Heart right ventricle (tissue), 16 donors: ENCODE measurements at regions of chr2 and their contacts with region 1.

Region 1: DNA sequence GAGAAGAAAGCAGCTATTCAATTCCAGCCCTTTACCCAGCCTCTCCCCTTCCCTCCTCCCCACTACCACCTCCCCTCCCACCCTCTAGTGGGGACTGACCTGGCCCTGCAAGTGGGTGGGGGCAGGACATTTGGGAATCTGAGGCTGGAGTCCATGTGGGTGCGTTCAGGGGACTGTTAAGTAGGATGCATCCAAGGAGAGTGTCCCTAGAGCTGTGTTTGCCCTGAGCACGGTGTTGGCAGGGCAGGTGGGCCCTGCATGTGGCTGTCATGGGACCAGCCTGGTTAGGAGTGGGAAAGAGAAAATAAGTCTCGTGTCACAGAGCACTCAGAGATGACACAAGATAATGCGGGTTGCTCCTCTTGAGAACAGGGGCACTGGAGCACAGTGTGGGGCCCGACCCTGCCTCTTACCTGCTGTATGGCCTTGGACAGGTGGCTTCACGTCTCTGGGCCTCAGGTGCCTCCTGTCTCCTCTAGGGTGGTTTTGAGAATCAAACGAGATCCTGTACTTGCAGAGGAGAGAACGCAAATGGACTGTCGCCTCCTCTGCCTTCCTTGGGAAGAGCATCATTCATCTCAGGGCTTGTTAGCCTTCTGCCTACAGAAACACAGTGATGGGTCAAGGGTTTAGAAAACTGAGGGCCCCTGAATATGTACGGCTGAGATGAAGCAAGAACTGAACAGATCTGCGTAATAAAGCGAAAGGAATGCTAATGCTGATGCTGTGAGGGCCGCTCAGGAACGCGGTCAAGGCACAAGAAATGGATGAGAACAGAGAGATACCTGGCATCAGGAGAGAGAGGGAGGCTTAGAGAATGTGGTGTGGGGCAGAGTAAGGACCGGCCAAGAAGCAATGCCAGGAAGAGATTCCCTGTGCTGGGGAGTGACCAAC is 187.7 kb upstream of the HAAO start:
- DNase-seq: no peak
- ATAC-seq: no peak
- H3K4me3 ChIP-seq: no peak overlapping the region
- H3K27ac ChIP-seq: no peak overlapping the region
- H3K4me1 ChIP-seq: peaks cover 7 to 28% (median 11%) of the 10 kb centered on the region in 9 donors
- H3K27me3 ChIP-seq: no peaks in the 10 kb centered on the region
- CTCF ChIP-seq: no peak

Region 2: DNA sequence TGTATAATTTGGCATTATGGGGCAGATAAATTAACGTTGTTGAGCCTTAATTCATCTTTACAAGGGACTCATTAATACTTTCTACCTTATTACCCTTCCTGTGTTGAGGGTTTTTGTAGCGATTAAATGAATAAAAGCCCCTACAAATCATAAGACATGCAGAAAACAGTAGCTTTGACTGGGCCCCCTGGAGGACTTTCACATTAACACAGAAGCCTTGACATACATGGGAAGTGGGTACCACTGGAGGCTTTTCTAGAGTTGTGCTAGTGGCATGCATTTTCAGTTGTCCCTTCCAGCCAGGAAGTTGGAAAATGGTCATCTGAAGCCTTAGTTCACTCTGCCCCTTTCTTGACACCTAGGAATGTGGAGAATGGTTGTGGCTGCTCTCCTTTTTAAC is 381.5 kb before region 1 on chr2:
- intact Hi-C with region 1: no loop called
- DNase-seq: no peak
- ATAC-seq: no peak
- H3K4me3 ChIP-seq: no peak overlapping the region
- H3K27ac ChIP-seq: no peak overlapping the region
- H3K4me1 ChIP-seq: peaks cover 0 to 7% (median 0%) of the 10 kb centered on the region in 9 donors
- H3K27me3 ChIP-seq: no peaks in the 10 kb centered on the region
- CTCF ChIP-seq: no peak

Region 3: GRCh38 chr2:43000242-43001054 is 20.3 kb after region 1 on chr2:
- intact Hi-C with region 1: loop called in 1 of 10 experiments (anchors 1 kb)
- DNase-seq: no peak
- ATAC-seq: peak in 3 of 8 donors; percentile 19 to 42 (median 25)
- H3K4me3 ChIP-seq: no peak overlapping the region
- H3K27ac ChIP-seq: no peak overlapping the region
- H3K4me1 ChIP-seq: peaks cover 0 to 8% (median 0%) of the 10 kb centered on the region in 9 donors
- H3K27me3 ChIP-seq: no peaks in the 10 kb centered on the region
- CTCF ChIP-seq: no peak

Region 4: DNA sequence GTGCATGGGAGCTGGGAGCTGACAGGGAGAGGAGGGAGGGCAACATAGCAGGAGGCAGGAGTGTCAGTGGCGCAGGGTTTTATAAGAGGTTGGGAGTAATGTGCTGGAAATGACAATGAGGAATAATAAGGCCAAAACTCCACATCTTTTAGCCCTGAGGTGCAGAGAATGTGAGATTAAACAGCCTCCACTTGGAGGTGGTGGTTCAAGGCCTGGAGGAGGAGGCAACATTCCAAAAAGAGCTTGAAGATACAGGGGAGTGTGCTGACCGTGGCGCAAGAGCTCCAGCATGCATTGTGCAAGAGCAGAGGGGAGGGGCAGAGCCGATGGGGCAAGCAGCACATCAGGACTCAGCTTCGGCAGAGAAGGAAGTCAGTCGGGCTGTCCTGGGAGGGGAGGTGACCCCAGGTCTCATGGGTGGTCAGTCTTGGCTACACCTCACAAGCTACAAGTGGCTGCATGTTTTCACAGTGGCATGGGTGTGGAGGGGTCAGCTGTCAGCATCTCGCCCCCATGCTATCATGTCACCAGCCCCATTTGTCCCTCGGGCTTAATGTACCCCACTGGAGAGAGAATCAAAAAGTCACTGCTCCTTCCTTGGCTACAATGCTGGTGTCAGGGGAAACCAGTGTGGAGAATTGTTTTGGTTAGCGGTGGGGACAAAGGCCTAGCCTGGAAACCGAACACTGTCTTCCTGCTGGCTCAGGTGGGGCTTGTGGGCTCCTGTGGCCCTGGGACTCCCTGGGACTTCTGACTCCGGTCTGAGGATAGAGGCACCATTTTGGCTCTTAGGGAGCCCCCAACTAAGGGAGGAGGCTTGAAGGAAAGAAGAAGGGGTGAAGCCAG is 38.3 kb after region 1 on chr2:
- intact Hi-C with region 1: loop called in 8 of 10 experiments (anchors 5 to 10 kb)
- DNase-seq: peak; percentile 66 to 79
- ATAC-seq: peak; percentile 62 to 92 (median 87)
- H3K4me3 ChIP-seq: no peak overlapping the region
- H3K27ac ChIP-seq: peak overlapping the region; percentile 59 to 89 (median 79)
- H3K4me1 ChIP-seq: peaks cover 0 to 42% (median 22%) of the 10 kb centered on the region in 9 donors
- H3K27me3 ChIP-seq: no peaks in the 10 kb centered on the region
- CTCF ChIP-seq: no peak

Region 5: GRCh38 chr2:43073368-43073767 is 93.3 kb after region 1 on chr2:
- intact Hi-C with region 1: loop called in 1 of 10 experiments (anchors 5 kb)
- DNase-seq: peak in 1 of 2 donors; percentile 41
- ATAC-seq: peak in 5 of 8 donors; percentile 6 to 54 (median 16)
- H3K4me3 ChIP-seq: no peak overlapping the region
- H3K27ac ChIP-seq: peak overlapping the region; percentile 37 to 95 (median 75)
- H3K4me1 ChIP-seq: peaks cover 51 to 90% (median 67%) of the 10 kb centered on the region in 9 donors
- H3K27me3 ChIP-seq: no peaks in the 10 kb centered on the region
- CTCF ChIP-seq: no peak

Region 6: GRCh38 chr2:43255296-43255910 is 275.3 kb after region 1 on chr2:
- intact Hi-C with region 1: no loop called
- DNase-seq: no peak
- ATAC-seq: no peak
- H3K4me3 ChIP-seq: no peak overlapping the region
- H3K27ac ChIP-seq: peak overlapping the region in 1 of 10 donors; percentile 29
- H3K4me1 ChIP-seq: peaks cover 7 to 32% (median 20%) of the 10 kb centered on the region in 9 donors
- H3K27me3 ChIP-seq: no peaks in the 10 kb centered on the region
- CTCF ChIP-seq: no peak